GM12878 (cell line): ENCODE measurements at regions of chr14 and their contacts with region 1.

Region 1: DNA sequence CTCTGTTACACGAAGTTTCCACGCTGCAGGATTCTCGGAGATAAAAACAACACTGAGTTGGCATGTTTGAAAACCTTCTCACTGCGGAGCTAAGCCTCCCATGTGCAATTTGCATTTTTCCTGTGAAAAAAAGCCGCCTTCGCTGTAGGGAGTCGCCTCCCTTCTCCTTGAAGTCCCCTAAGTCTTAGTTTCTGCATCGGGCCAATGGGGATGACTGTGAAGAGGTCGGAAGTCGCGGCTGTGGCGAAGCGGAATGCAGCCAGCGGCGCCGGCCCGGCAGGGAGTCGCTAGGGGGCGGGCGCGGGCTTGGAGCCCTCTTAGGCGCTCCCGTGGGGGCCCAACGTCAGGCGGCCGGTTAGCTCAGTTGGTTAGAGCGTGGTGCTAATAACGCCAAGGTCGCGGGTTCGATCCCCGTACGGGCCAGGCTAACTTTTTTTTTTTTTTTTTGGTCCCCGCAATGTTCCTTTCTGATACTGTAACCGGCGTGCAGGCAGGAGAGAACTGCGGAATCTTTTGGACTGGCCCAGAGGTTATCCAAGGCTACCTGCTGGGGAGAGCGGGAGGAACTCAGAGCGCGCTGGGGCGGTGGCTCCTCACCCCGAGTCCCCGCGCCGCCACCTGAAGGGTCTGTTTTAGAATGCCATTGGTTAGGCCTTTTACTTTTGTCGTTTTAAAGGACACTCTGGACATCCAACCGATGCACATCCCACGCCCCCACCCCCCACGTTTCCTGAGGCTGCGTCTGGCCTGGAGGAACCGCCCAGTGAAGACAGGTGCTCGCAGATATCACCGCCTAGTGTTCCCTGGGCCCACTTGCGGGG is 2.6 kb upstream of the ZNF839 start:
- DNase-seq: peak; percentile 61
- ATAC-seq: peak; percentile 83
- H3K4me3 ChIP-seq: peak overlapping the region; percentile 75
- H3K27ac ChIP-seq: peak overlapping the region; percentile 61; the same call in 1 of the 2 replicates
- H3K4me1 ChIP-seq: peaks cover 27% of the 10 kb centered on the region
- H3K27me3 ChIP-seq: no peaks in the 10 kb centered on the region
- CTCF ChIP-seq: peak; percentile 84 to 93 (median 89)
- EP300 ChIP-seq: peak in 1 of 2 experiments; percentile 45; a peak in 1 of 4 replicates
- POLR2A ChIP-seq: no peak
- RAD21 ChIP-seq: no peak

Region 2: DNA sequence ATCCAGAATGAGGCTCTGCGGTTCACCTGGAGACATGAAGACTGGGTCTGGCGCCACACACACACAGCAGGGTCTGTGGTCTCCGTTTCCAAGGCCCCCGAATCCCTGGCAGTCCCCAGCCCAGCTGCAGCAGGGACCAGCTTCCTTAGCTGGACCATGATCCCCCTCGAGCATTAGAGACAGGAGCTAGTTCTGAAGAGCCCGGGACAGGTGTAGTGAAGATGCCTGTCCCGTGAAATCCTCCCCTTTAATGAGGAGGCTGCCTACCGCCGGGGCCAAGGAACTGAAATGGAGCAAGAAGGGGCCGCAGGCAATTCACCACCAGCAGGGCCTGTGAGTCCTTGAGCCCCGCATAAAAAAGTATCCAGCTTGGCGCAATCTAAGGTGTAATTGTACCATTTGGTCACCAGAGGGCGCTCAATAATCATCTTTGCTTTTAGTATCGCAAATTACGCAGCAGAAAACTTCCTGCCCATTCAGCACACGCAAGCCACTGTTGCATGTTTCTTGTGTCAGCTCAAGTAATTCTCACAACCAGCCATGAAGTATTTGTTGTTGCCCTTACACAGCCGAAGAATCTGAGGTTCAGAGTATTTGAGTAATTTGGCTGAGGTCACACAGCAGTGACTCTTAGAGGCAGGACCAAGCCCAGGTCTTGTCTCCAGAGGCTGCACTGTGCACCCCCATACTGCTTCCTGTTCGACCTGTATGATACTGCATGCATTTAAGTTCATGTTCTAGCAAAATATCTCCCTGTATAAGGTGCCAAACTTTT is 609.7 kb before region 1 on chr14:
- CTCF ChIA-PET with region 1: interaction called, 3 read pairs
- POLR2A ChIA-PET with region 1: no interaction called
- RAD21 ChIA-PET with region 1: no interaction called
- SMC1A ChIA-PET with region 1: no interaction called
- in situ Hi-C with region 1: no loop called
- intact Hi-C with region 1: loop called (anchors 10 kb)
- DNase-seq: peak; percentile 53
- ATAC-seq: peak; percentile 78
- H3K4me3 ChIP-seq: no peak overlapping the region
- H3K27ac ChIP-seq: no peak overlapping the region
- H3K4me1 ChIP-seq: peaks cover 14% of the 10 kb centered on the region
- H3K27me3 ChIP-seq: no peaks in the 10 kb centered on the region; a peak in 2 of 4 replicates
- CTCF ChIP-seq: peak; percentile 65 to 87 (median 80)
- EP300 ChIP-seq: no peak
- POLR2A ChIP-seq: no peak
- RAD21 ChIP-seq: peak; percentile 92

Region 3: DNA sequence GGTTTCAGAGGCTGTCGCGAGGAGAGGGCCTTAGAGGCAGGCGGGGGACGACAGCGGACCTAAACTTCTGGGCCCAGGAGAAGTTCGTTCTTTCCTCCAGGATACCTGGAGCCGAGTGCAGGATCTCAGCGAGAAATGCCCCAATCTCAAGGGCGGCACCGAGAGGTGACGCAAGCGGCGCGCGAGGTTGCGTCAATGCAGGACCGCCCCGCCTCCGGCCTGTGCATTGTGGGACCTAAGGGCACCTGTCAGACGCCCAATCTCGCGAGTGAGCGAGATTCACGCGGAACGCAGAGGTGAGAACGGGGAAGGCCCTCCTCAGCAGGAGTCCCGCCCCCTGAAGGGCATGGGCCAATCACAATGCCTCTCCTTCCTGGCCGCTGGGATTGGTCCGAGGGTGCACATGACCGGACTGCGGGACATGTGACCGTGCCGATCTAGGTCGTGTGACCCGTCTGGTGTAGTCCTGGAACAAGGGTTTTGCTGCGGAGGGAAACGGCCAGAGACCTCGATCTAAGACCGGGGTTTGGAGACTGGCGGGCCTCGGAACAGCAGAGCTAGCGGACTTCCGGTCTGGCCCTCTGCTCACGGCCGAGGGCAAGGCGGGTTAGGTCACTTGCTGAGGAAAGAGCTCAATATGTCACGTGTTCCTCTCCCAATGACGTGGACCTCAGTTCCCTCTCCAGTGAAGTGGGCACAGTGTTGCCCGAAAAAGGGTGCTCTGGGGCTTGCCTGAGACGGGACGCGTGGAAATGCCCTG is 368.9 kb before region 1 on chr14:
- CTCF ChIA-PET with region 1: interaction called, 3 read pairs
- POLR2A ChIA-PET with region 1: no interaction called
- RAD21 ChIA-PET with region 1: interaction called, 5 read pairs
- SMC1A ChIA-PET with region 1: no interaction called
- in situ Hi-C with region 1: no loop called
- intact Hi-C with region 1: loop called (anchors 5 kb)
- DNase-seq: peak; percentile 100
- ATAC-seq: peak; percentile 99
- H3K4me3 ChIP-seq: peak overlapping the region; percentile 99
- H3K27ac ChIP-seq: peak overlapping the region; percentile 83
- H3K4me1 ChIP-seq: peaks cover 2% of the 10 kb centered on the region; the same call in 1 of the 2 replicates
- H3K27me3 ChIP-seq: no peaks in the 10 kb centered on the region
- CTCF ChIP-seq: no peak; a peak in 1 of 6 replicates
- EP300 ChIP-seq: 0 out of 4 replicates have a peak, but pooled peaks of 1 of the 2 experiments have one; percentile 32
- POLR2A ChIP-seq: peak; percentile 91
- RAD21 ChIP-seq: no peak

Region 4: DNA sequence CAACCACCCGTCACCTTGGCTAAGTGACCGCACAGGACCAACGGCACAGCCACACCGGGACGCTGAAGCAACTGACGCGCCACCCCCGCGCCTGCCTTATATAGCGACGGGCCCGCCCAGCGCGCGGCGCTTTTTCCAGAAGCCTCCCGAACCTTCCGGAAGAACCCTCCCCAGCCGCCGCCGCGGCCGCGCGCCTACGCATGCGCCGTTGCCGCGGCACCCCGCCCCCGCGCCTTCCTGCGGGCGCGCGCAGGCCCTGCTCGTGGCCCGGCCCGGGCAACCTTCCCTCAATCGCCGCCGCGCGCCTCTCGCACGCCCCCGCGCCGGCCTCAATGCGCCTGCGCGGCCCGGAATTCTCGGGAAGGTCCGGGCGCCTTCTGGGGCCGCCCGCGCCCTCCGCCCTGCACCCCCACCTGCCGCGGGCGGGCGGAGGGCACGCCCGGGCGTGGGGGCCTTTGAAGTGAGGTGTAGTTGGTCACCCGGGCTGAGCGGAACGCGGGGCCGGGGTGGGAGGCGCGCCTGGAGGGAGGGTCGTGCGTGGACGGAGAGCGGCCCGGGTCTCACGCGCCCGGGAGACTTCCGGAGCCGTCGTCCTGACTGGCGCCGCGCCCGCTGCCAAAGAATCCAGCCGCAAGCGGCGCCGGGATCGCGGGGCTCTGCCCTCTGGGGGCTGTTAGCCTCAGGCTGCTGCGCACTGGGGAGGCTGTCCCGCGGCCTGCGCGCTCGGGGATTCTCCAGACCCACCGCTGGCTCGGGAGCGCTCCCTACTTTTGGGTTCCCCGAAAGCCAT is 229.8 kb before region 1 on chr14 and contains the start of gene HSP90AA1:
- CTCF ChIA-PET with region 1: interaction called, 6 read pairs
- POLR2A ChIA-PET with region 1: no interaction called
- RAD21 ChIA-PET with region 1: interaction called, 7 read pairs
- SMC1A ChIA-PET with region 1: no interaction called
- in situ Hi-C with region 1: no loop called
- intact Hi-C with region 1: loop called (anchors 5 kb)
- DNase-seq: peak; percentile 60
- ATAC-seq: peak; percentile 70
- H3K4me3 ChIP-seq: peak within 1 kb of the TSS; percentile 98
- H3K27ac ChIP-seq: peak within 1 kb of the TSS; percentile 95
- H3K4me1 ChIP-seq: peaks cover 9% of the 10 kb centered on the region
- H3K27me3 ChIP-seq: no peaks in the 10 kb centered on the region
- CTCF ChIP-seq: 0 out of 6 replicates have a peak, but pooled peaks of 1 of the 3 experiments have one; percentile 15
- EP300 ChIP-seq: peak in 1 of 2 experiments; percentile 97; a peak in 1 of 4 replicates
- POLR2A ChIP-seq: peak; percentile 96
- RAD21 ChIP-seq: no peak
- polyA plus RNA-seq, gene HSP90AA1: 555 to 817 TPM

Region 5: DNA sequence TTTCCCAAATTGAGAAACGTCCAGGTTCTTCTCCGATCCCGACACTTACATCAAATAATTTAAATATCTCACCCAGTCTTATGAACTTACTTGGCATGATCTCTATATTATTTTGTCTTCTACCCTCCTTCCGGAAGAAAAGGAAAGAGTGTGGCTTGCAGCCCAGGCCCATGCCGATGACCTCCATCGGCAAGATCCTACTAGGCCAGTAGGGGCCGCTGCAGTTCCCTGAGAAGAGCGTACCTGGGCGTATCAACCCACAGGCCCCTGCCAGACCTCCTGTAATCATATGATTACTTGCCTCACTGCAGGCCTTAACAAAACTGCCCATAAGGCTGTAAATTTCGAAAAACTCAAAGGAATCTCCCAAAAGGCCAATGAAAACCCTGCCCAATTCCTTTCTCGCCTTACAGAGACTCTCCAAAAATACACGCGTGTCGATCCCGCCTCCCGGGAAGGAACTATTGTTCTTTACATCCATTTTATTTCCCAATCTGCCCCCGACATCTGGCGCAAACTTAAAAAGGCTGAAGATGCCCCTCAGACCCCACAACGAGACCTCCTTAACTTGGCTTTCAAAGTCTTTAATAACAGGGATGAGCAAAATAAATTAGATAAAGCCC is 81.6 kb before region 1 on chr14:
- CTCF ChIA-PET with region 1: interaction called, 10 read pairs
- POLR2A ChIA-PET with region 1: no interaction called
- RAD21 ChIA-PET with region 1: interaction called, 3 read pairs
- SMC1A ChIA-PET with region 1: no interaction called
- in situ Hi-C with region 1: loop called (anchors 5 kb)
- intact Hi-C with region 1: loop called (anchors 1 kb)
- DNase-seq: no peak
- ATAC-seq: peak; percentile 99
- H3K4me3 ChIP-seq: no peak overlapping the region
- H3K27ac ChIP-seq: no peak overlapping the region
- H3K4me1 ChIP-seq: no peaks in the 10 kb centered on the region
- H3K27me3 ChIP-seq: no peaks in the 10 kb centered on the region; a peak in 1 of 4 replicates
- CTCF ChIP-seq: peak; percentile 71 to 90 (median 79)
- EP300 ChIP-seq: no peak
- POLR2A ChIP-seq: no peak
- RAD21 ChIP-seq: peak; percentile 73

Region 6: DNA sequence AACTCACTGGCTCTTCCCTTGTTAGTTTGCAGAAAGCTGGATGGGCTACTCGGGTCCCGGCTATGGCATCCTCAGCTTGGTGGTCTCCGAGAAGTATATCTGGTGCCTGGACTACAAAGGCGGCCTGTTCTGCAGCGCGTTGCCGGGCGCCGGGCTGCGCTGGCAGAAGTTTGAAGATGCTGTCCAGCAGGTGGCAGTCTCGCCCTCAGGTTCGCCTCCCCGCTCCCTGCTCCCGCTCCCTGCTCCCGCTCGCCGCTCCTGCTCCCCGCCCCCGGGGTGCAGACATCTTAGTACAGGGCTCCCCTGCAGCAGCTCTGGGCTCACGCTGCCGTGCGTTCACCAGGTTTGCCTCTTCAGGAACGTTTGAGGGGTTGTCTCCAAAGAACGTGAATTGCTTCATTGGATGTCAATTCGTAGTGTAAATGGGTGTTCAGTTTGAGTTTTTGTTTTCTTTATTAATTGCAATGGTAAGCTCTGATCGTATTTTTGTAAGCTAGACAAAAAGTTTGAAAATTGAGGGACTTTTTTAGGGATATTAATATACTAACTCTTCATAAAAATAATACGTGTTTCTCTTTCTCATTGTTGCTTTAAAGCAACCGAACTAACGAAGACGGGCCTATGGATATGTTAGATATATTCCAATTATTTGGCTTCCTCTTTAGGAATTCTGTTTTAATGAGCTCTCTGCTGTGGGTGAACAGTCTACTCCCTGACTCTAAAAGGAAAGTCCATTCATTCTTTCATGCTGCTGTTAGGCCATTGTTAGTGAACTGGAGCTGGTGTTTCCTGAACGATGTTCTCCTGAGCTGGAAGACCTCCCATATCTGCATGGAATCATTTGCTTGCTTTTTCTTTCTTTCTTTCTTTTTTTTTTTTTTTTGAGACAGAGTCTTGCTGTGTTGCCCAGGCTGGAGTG is 121.3 kb after region 1 on chr14:
- CTCF ChIA-PET with region 1: interaction called, 11 read pairs
- POLR2A ChIA-PET with region 1: no interaction called
- RAD21 ChIA-PET with region 1: interaction called, 4 read pairs
- SMC1A ChIA-PET with region 1: interaction called, 5 read pairs
- in situ Hi-C with region 1: no loop called
- intact Hi-C with region 1: no loop called
- DNase-seq: peak; percentile 37
- ATAC-seq: peak; percentile 99
- H3K4me3 ChIP-seq: no peak overlapping the region
- H3K27ac ChIP-seq: no peak overlapping the region
- H3K4me1 ChIP-seq: no peaks in the 10 kb centered on the region; the same call in 1 of the 2 replicates
- H3K27me3 ChIP-seq: peaks cover 0 to 1% of the 10 kb centered on the region in 2 experiments; a peak in 1 of 4 replicates
- CTCF ChIP-seq: peak; percentile 65 to 88 (median 80)
- EP300 ChIP-seq: no peak
- POLR2A ChIP-seq: no peak
- RAD21 ChIP-seq: peak; percentile 75